PC-9 (cell line): ENCODE measurements at regions of chr2 and their contacts with region 1.

Region 1: DNA sequence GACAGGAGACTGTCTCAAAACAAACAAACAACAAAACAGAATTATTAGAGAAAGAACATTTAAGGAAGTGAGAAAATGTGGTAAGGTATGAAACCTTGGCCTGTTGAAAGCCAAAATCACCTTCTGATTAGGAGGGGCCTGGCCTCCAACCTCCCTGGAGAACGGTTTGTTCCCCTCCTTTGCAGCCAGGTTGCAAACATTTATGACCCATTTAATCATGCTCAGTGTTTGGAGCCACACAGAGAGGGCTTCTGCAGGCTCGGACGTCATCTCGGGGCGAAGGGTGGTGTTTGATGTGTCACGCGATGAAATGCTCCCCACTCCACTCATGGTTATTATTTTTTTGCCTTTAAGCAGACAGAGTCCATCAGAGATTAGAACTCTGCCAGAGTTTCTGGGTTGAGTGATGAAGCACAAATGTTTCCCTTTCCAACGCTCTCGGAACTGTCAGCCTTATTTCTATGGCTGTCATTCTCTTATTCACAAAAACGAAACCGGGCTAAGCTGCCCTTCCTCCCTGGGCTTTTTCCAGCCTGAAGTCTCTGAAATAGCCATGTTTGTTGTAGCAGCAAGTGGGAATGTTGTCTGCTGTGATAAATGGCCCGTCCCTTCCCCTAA is 33.6 kb upstream of the ROCK2 start:
- DNase-seq: no peak
- H3K4me3 ChIP-seq: no peak overlapping the region
- H3K27ac ChIP-seq: no peak overlapping the region
- H3K4me1 ChIP-seq: peaks cover 15% of the 10 kb centered on the region
- H3K27me3 ChIP-seq: no peaks in the 10 kb centered on the region
- CTCF ChIP-seq: no peak

Region 2: DNA sequence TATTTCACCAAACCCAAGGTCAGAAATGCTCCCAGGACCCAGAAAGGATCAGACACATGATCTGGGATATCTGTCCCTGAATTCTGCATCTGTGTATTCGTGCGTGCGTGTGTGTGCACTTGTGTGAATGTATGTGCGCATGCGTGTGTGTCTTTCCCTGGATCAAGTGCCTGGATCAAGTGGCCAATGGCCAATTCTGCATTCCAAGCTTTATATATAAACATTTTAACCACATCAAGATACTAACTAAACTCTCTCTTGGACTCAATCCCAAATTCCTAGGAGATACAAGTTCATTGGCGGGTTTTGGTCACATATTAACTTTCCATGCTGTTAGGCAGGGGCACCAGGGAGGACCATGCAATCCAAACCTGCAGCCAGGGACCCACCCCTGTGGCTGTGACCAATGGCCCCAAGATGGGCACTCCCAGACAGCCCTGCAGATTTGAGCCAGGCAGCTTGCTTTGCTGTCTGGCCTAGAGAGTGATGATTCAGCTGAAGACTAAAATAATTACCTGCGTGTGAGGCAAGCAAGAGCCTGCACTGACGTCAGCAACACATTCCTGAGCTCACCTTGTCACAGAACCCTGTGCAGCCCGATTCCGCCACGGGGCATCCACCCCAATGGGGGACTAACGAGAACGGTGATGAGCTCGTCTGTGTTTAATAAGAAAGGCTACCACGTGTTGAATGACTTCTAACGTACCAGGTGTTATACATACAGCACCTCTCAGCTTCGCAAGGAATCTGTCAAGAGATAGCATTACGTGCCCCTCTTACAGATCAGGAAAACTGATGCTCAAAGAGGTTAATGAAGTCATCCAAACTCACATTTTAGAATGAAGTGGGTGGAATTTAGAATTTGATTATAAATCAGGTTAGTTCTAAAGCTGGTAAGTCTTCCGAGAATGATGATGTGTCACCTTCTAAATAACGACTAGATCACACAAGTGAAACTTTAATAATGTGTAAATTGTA is 11.8 kb after region 1 on chr2:
- CTCF ChIA-PET with region 1: interaction called, 4 read pairs
- POLR2A ChIA-PET with region 1: no interaction called
- intact Hi-C with region 1: loop called (anchors 2 kb)
- DNase-seq: peak in 1 of 2 experiments; percentile 82
- H3K4me3 ChIP-seq: no peak overlapping the region
- H3K27ac ChIP-seq: no peak overlapping the region
- H3K4me1 ChIP-seq: no peaks in the 10 kb centered on the region
- H3K27me3 ChIP-seq: no peaks in the 10 kb centered on the region
- CTCF ChIP-seq: no peak